ENCODE measurements at regions of chr1 and their contacts with region 1.

Region 1: GRCh38 chr1:110034451-110035235 is at the start of gene STRIP1:
- DNase-seq: peak; percentile 96
- ATAC-seq: peak; percentile 93
- H3K4me3 ChIP-seq: peak within 1 kb of the TSS; percentile 71 to 99 (median 93)
- H3K4me3 Mint-ChIP-seq: peak within 1 kb of the TSS; percentile 97
- H3K27ac ChIP-seq: peak within 1 kb of the TSS; percentile 76 to 95
- H3K27ac Mint-ChIP-seq: peak within 1 kb of the TSS; percentile 93
- H3K4me1 ChIP-seq: peaks cover 25 to 31% of the 10 kb centered on the region in 2 donors
- H3K4me1 Mint-ChIP-seq: peaks cover 43% of the 10 kb centered on the region
- H3K27me3 ChIP-seq: no peaks in the 10 kb centered on the region
- H3K27me3 Mint-ChIP-seq: no peaks in the 10 kb centered on the region
- CTCF ChIP-seq: no peak
- total RNA-seq, gene STRIP1: 97.5 and 105 TPM in 2 replicates

Region 2: DNA sequence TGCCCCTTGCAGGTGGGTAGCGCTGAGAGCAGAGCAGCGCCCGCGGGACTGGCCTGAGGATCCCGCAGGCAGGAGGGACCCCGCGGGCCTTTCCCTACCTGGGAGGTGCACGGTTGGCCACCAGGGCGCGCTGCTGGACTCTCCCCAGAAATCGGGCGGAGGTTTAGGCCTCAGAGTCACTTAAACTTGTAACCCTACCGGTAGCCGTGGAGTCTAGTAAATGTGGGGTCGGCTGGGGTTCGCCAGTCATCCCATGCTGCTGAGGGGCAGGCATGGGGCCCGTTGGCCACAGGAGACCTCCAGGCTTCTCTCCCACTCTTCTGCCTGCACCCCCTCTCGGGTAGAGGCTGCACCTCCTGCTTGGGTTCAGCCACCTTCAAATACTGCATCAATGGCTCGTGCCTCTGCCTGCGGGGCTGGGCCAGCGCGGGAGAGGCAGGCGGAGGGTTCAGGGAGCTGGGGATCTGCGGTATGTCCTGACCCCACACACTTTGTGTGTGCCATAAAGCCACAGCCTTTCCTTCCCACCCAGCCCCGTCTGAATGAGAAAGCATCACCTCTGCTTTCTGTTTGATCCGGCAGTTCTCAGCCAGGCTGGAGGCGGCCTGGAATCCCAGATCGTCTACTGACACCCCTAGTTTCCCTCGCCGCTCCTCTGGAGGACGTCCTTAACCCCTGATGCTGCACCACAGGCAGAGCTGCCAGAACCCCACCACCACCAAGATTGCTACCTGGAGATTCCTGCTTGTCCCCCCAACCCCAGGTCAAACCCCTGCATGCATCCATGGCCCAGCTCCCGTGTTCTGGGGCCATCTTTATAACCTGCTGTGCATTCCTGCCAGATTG is 391.0 kb before region 1 on chr1:
- CTCF ChIA-PET with region 1: interaction called, 17 read pairs
- POLR2A ChIA-PET with region 1: no interaction called
- intact Hi-C with region 1: no loop called
- DNase-seq: peak; percentile 86
- ATAC-seq: peak; percentile 88
- H3K4me3 ChIP-seq: peak overlapping the region in 1 of 5 experiments; percentile 6
- H3K4me3 Mint-ChIP-seq: peak overlapping the region; percentile 7
- H3K27ac ChIP-seq: no peak overlapping the region
- H3K27ac Mint-ChIP-seq: no peak overlapping the region
- H3K4me1 ChIP-seq: peaks cover 4 to 14% of the 10 kb centered on the region in 2 donors
- H3K4me1 Mint-ChIP-seq: peaks cover 13% of the 10 kb centered on the region
- H3K27me3 ChIP-seq: peaks cover 0 to 2% (median 0%) of the 10 kb centered on the region in 4 experiments
- H3K27me3 Mint-ChIP-seq: peaks cover 4% of the 10 kb centered on the region
- CTCF ChIP-seq: peak; percentile 92

Region 3: GRCh38 chr1:109712321-109712864 is 322.2 kb before region 1 on chr1:
- CTCF ChIA-PET with region 1: no interaction called
- POLR2A ChIA-PET with region 1: no interaction called
- intact Hi-C with region 1: no loop called
- DNase-seq: no peak
- ATAC-seq: no peak
- H3K4me3 ChIP-seq: peak overlapping the region in 3 of 5 experiments; percentile 39 to 61 (median 61)
- H3K4me3 Mint-ChIP-seq: peak overlapping the region; percentile 23
- H3K27ac ChIP-seq: no peak overlapping the region
- H3K27ac Mint-ChIP-seq: no peak overlapping the region
- H3K4me1 ChIP-seq: peaks cover 0 to 8% of the 10 kb centered on the region in 2 donors
- H3K4me1 Mint-ChIP-seq: no peaks in the 10 kb centered on the region
- H3K27me3 ChIP-seq: peaks cover 0 to 3% (median 0%) of the 10 kb centered on the region in 4 experiments
- H3K27me3 Mint-ChIP-seq: peaks cover 15% of the 10 kb centered on the region
- CTCF ChIP-seq: no peak

Region 4: GRCh38 chr1:110011527-110012041 is 23.1 kb before region 1 on chr1:
- CTCF ChIA-PET with region 1: interaction called, 52 read pairs
- POLR2A ChIA-PET with region 1: interaction called, 26 read pairs
- intact Hi-C with region 1: loop called (anchors 1 kb)
- DNase-seq: peak; percentile 92
- ATAC-seq: peak; percentile 93
- H3K4me3 ChIP-seq: peak overlapping the region in 3 of 5 experiments; percentile 29 to 37 (median 34)
- H3K4me3 Mint-ChIP-seq: peak overlapping the region; percentile 82
- H3K27ac ChIP-seq: peak overlapping the region; percentile 93 to 94
- H3K27ac Mint-ChIP-seq: peak overlapping the region; percentile 98
- H3K4me1 ChIP-seq: peaks cover 25 to 27% of the 10 kb centered on the region in 2 donors
- H3K4me1 Mint-ChIP-seq: peaks cover 33% of the 10 kb centered on the region
- H3K27me3 ChIP-seq: no peaks in the 10 kb centered on the region
- H3K27me3 Mint-ChIP-seq: no peaks in the 10 kb centered on the region
- CTCF ChIP-seq: peak; percentile 79

Region 5: DNA sequence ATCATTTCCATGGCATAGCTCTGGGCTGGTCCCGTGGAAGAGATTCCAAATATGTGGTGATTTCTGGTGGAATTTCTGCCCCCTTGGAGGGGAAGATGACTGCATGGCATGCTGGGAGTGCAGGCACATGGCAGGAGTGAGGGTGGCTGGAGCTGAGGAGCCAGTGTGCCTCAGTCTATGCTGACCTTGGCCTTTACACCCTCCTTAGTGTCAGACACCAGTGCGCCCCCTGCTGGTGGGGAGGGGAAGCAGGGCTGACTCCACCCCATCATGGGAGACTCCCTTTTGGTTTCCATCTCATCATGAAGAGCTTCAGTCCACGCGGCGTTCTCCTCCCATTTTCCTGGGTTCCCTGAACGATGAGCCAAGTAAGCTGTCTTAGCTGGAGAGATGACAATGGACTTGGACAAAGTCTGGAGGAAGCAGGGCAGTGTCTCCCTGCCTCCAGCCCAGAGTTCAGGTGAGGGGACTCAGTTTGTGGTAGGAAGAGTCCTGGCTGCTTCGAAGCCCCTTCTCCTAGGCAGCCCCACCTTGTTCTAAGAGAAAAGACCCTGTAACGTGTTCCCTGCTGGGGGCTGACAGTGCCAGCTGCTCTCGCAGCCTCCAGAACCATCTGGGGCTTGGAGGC is 25.5 kb after region 1 on chr1:
- CTCF ChIA-PET with region 1: interaction called, 67 read pairs
- POLR2A ChIA-PET with region 1: interaction called, 5 read pairs
- intact Hi-C with region 1: no loop called
- DNase-seq: peak; percentile 76
- ATAC-seq: peak; percentile 73
- H3K4me3 ChIP-seq: no peak overlapping the region
- H3K4me3 Mint-ChIP-seq: no peak overlapping the region
- H3K27ac ChIP-seq: no peak overlapping the region
- H3K27ac Mint-ChIP-seq: no peak overlapping the region
- H3K4me1 ChIP-seq: no peaks in the 10 kb centered on the region
- H3K4me1 Mint-ChIP-seq: no peaks in the 10 kb centered on the region
- H3K27me3 ChIP-seq: no peaks in the 10 kb centered on the region
- H3K27me3 Mint-ChIP-seq: peaks cover 1% of the 10 kb centered on the region
- CTCF ChIP-seq: peak; percentile 85

Region 6: GRCh38 chr1:110254996-110255787 is 220.5 kb after region 1 on chr1:
- CTCF ChIA-PET with region 1: no interaction called
- POLR2A ChIA-PET with region 1: no interaction called
- intact Hi-C with region 1: no loop called
- DNase-seq: no peak
- ATAC-seq: peak; percentile 45
- H3K4me3 ChIP-seq: no peak overlapping the region
- H3K4me3 Mint-ChIP-seq: no peak overlapping the region
- H3K27ac ChIP-seq: no peak overlapping the region
- H3K27ac Mint-ChIP-seq: no peak overlapping the region
- H3K4me1 ChIP-seq: peaks cover 4 to 9% of the 10 kb centered on the region in 2 donors
- H3K4me1 Mint-ChIP-seq: peaks cover 9% of the 10 kb centered on the region
- H3K27me3 ChIP-seq: no peaks in the 10 kb centered on the region
- H3K27me3 Mint-ChIP-seq: no peaks in the 10 kb centered on the region
- CTCF ChIP-seq: no peak

Region 7: DNA sequence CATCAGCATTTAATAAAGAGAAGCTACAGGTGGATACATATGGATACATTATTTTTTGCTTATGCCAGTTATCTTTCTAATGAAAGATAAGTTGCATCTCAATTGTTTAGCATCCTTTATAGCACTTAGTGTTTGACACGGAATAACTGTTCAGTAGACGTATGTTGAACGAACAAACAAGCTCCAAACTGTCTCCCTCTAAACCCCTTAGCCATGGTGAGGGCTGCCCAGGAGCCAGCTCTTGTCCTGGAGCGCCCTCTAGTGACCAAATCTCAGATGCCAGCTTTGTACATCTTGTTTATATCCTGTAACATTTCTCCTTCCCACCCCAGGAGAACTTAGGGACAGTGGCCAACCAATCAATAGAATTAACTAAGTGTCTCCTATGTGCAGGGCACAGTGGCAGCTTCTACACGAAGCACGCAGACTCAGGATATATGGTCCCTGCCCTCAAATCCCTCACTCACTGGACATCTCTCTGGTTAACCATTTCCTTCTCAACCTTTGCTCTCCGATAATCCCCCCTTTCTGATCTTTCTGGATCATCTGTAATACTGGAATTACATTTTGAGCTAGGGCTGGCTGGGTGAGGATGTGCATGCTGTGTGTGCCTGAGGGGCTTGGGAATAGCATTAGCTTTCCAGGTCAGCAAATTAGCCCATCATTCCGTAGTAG is 461.4 kb after region 1 on chr1:
- CTCF ChIA-PET with region 1: interaction called, 26 read pairs
- POLR2A ChIA-PET with region 1: no interaction called
- intact Hi-C with region 1: loop called (anchors 1 kb)
- DNase-seq: peak; percentile 84
- ATAC-seq: peak; percentile 84
- H3K4me3 ChIP-seq: no peak overlapping the region
- H3K4me3 Mint-ChIP-seq: no peak overlapping the region
- H3K27ac ChIP-seq: no peak overlapping the region
- H3K27ac Mint-ChIP-seq: no peak overlapping the region
- H3K4me1 ChIP-seq: no peaks in the 10 kb centered on the region
- H3K4me1 Mint-ChIP-seq: no peaks in the 10 kb centered on the region
- H3K27me3 ChIP-seq: no peaks in the 10 kb centered on the region
- H3K27me3 Mint-ChIP-seq: no peaks in the 10 kb centered on the region
- CTCF ChIP-seq: peak; percentile 98

Measured in B cell (primary cell).